H1 (cell line): ENCODE measurements at regions of chr9 and their contacts with region 1.

Region 1: GRCh38 chr9:34363619-34364351 is 12.9 kb downstream of the MYORG start:
- DNase-seq: peak in 1 of 2 experiments; percentile 52
- H3K4me3 ChIP-seq: peak overlapping the region in 3 of 4 experiments; percentile 7 to 42 (median 19); a peak in 4 of 8 replicates
- H3K27ac ChIP-seq: no peak overlapping the region
- H3K4me1 ChIP-seq: peaks cover 9 to 19% (median 11%) of the 10 kb centered on the region in 4 experiments; a peak in 6 of 7 replicates
- H3K27me3 ChIP-seq: no peaks in the 10 kb centered on the region
- CTCF ChIP-seq: no peak
- EP300 ChIP-seq: no peak
- POLR2A ChIP-seq: no peak
- RAD21 ChIP-seq: no peak

Region 2: GRCh38 chr9:34376596-34377403 is 13.0 kb after region 1 on chr9 and contains the start of gene MYORG:
- CTCF ChIA-PET with region 1: interaction called, 83 read pairs
- POLR2A ChIA-PET with region 1: interaction called, 18 read pairs
- DNase-seq: peak; percentile 98
- H3K4me3 ChIP-seq: peak within 1 kb of the TSS; percentile 61 to 75 (median 68)
- H3K27ac ChIP-seq: no peak within 1 kb of the TSS
- H3K4me1 ChIP-seq: peaks cover 6 to 15% (median 7%) of the 10 kb centered on the region in 4 experiments
- H3K27me3 ChIP-seq: peaks cover 3 to 26% (median 22%) of the 10 kb centered on the region in 4 experiments
- CTCF ChIP-seq: no peak
- EP300 ChIP-seq: no peak
- POLR2A ChIP-seq: no peak; a peak in 1 of 3 replicates
- RAD21 ChIP-seq: no peak
- total RNA-seq, gene MYORG: 5.0 and 5.9 TPM in 2 replicates

Region 3: GRCh38 chr9:34500623-34501267 is 137.0 kb after region 1 on chr9:
- CTCF ChIA-PET with region 1: no interaction called
- POLR2A ChIA-PET with region 1: no interaction called
- DNase-seq: peak in 1 of 2 experiments; percentile 91
- H3K4me3 ChIP-seq: no peak overlapping the region
- H3K27ac ChIP-seq: no peak overlapping the region
- H3K4me1 ChIP-seq: 0 out of 7 replicates have a peak, but pooled peaks cover 0 to 3% (median 0%) of the 10 kb centered on the region in 4 experiments
- H3K27me3 ChIP-seq: no peaks in the 10 kb centered on the region; a peak in 1 of 7 replicates
- CTCF ChIP-seq: peak; percentile 90 to 97 (median 96)
- EP300 ChIP-seq: no peak
- POLR2A ChIP-seq: no peak
- RAD21 ChIP-seq: peak; percentile 92 to 93